PC-9 (cell line): ENCODE measurements at regions of chr10 and their contacts with region 1.

Region 1: GRCh38 chr10:122618461-122619165 is 58.1 kb downstream of the DMBT1 start:
- DNase-seq: no peak
- H3K4me3 ChIP-seq: no peak overlapping the region
- H3K27ac ChIP-seq: no peak overlapping the region
- H3K4me1 ChIP-seq: no peaks in the 10 kb centered on the region
- H3K27me3 ChIP-seq: no peaks in the 10 kb centered on the region
- CTCF ChIP-seq: no peak

Region 2: DNA sequence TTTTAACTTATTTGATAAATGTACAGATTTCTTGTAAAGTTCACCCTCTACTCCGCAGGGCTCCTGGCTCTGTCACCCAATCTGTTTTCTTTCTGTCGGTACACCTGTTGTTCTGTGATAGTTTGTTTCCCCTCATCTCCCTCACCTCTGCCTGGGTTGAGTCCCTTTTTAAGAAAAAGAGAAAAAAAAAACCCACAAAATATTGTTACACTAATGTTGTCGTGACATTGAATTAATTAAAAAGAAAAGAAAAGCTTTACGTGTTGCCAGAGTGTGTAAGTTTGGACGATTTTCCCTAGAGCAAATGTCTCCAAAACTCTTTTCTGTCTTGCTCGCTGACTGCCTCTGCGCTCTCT is 520.5 kb after region 1 on chr10:
- CTCF ChIA-PET with region 1: no interaction called
- POLR2A ChIA-PET with region 1: interaction called, 12 read pairs
- intact Hi-C with region 1: no loop called
- DNase-seq: no peak
- H3K4me3 ChIP-seq: peak overlapping the region; percentile 41; the same call in 1 of the 2 replicates
- H3K27ac ChIP-seq: no peak overlapping the region
- H3K4me1 ChIP-seq: no peaks in the 10 kb centered on the region
- H3K27me3 ChIP-seq: 0 out of 2 replicates have a peak, but pooled peaks cover 4% of the 10 kb centered on the region
- CTCF ChIP-seq: no peak